ENCODE measurements at regions of chr11 and their contacts with region 1.

Region 1: GRCh38 chr11:65888163-65888814 is at the start of gene FIBP:
- DNase-seq: peak; percentile 98 to 99 (median 99)
- ATAC-seq: peak; percentile 85 to 89 (median 88)
- H3K4me3 ChIP-seq: peak within 1 kb of the TSS; percentile 28 to 98 (median 78)
- H3K27ac ChIP-seq: peak within 1 kb of the TSS; percentile 89 to 100 (median 98)
- H3K4me1 ChIP-seq: peaks cover 13 to 66% (median 47%) of the 10 kb centered on the region in 12 donors
- H3K27me3 ChIP-seq: no peaks in the 10 kb centered on the region
- CTCF ChIP-seq: peak; percentile 79 to 90 (median 84)
- POLR2A ChIP-seq: peak in 1 of 2 donors; percentile 81
- total RNA-seq, gene FIBP: 48.2 to 93.9 (median 57.3) TPM

Region 2: DNA sequence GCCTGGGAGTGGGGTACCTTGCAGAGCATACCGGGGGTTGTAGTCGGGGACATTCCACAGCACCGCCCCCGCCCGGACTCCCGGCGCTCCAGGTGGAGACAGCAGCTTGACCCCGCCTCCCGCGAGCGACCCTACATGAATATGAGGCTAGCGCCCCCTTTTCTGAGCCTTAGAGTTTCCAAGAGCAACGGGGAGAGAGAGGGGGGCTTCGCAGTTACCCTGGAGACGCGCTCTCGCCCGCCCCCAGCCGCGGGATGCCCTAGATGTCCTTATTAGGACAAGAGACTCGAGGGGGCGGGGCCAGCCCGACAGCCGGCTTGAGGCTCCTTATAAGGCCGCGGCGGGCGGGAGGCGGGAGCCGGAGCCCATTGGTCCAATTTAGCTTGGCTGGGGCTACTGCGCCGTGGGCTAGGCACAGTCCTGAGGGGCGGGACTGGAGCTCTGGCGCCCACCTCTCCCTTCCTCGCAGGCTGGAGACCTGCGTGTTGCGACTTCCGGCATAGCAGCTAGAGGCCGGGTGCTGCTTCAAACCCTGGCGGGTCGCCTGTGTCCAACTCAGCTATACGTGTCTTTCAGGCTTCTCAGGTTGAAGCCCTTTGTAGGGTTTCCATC is 29.0 kb before region 1 on chr11:
- intact Hi-C with region 1: loop called in 5 of 10 experiments (anchors 1 to 2 kb)
- DNase-seq: peak; percentile 99 to 100 (median 99)
- ATAC-seq: peak; percentile 77 to 87 (median 83)
- H3K4me3 ChIP-seq: peak overlapping the region; percentile 74 to 100 (median 92)
- H3K27ac ChIP-seq: peak overlapping the region; percentile 94 to 99 (median 98)
- H3K4me1 ChIP-seq: peaks cover 0 to 57% (median 32%) of the 10 kb centered on the region in 12 donors
- H3K27me3 ChIP-seq: no peaks in the 10 kb centered on the region
- CTCF ChIP-seq: peak in 4 of 12 donors; percentile 7 to 42 (median 25)
- POLR2A ChIP-seq: peak; percentile 82 to 98

Region 3: GRCh38 chr11:65919146-65920033 is 31.1 kb after region 1 on chr11 and contains the start of gene DRAP1:
- intact Hi-C with region 1: loop called in 5 of 10 experiments (anchors 1 to 5 kb)
- DNase-seq: peak; percentile 99 to 100 (median 99)
- ATAC-seq: peak; percentile 92 to 96 (median 94)
- H3K4me3 ChIP-seq: peak within 1 kb of the TSS; percentile 85 to 100 (median 96)
- H3K27ac ChIP-seq: peak within 1 kb of the TSS; percentile 95 to 100 (median 97)
- H3K4me1 ChIP-seq: peaks cover 16 to 55% (median 48%) of the 10 kb centered on the region in 12 donors
- H3K27me3 ChIP-seq: no peaks in the 10 kb centered on the region
- CTCF ChIP-seq: peak in 2 of 12 donors; percentile 15 to 25
- POLR2A ChIP-seq: peak; percentile 38 to 79
- total RNA-seq, gene DRAP1: 76.5 to 144 (median 96.9) TPM

Region 4: GRCh38 chr11:65988791-65989592 is 100.7 kb after region 1 on chr11:
- intact Hi-C with region 1: loop called (anchors 2 to 10 kb)
- DNase-seq: peak in 4 of 5 donors; percentile 86 to 89 (median 88)
- ATAC-seq: peak; percentile 95 to 98 (median 98)
- H3K4me3 ChIP-seq: no peak overlapping the region
- H3K27ac ChIP-seq: peak overlapping the region in 1 of 12 donors; percentile 43
- H3K4me1 ChIP-seq: peaks cover 0 to 6% (median 0%) of the 10 kb centered on the region in 12 donors
- H3K27me3 ChIP-seq: no peaks in the 10 kb centered on the region
- CTCF ChIP-seq: peak; percentile 85 to 98 (median 92)
- POLR2A ChIP-seq: no peak

Measured in heart left ventricle (tissue), 16 donors.